Activated naive CD4-positive, alpha-beta T cell treated with anti-CD3 and anti-CD28 coated beads for 36 hours (primary cell): ENCODE measurements at regions of chr2 and their contacts with region 1.

Region 1: DNA sequence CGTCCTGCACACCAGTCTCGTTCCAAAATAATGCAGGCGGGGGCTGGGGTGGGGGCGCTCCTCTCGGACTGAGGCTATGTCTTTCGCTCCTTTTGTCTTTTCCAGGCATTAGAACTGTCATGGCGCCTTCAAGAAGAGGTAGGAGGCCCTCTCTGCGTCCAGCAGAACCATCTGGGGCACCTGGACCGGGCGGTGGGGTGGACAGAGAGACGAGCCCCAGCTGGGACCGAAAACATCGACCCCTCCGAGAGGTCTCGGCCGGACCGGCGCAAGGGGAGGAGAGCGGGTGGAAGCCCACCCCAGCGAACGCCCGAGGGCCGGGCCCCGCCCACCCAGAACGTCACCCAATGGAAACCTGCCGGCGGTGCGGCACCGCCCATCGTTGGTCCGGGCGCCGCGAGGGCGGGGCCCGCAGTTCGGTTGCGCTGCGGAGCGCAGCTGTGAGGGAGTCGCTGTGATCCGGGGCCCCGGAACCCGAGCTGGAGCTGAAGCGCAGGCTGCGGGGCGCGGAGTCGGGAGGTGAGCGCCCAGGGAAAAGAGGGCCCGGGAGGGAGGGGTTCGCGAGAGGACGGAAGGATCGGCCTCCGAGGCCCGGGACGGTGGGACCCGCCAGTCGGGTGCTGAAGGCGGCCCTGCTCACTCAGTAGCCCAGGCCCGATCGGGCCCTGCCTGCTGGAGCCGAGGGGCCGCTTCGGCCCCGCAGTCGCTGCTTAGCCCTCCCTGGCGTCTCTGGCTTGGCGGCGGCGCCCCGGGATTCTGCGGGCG is at the start of gene NRBP1:
- DNase-seq: peak; percentile 94
- H3K4me3 Mint-ChIP-seq: peak within 1 kb of the TSS; percentile 98
- H3K27ac Mint-ChIP-seq: peak within 1 kb of the TSS; percentile 94
- H3K4me1 Mint-ChIP-seq: peaks cover 31% of the 10 kb centered on the region
- H3K27me3 Mint-ChIP-seq: no peaks in the 10 kb centered on the region
- total RNA-seq, gene NRBP1: 60.0 to 63.3 TPM

Region 2: DNA sequence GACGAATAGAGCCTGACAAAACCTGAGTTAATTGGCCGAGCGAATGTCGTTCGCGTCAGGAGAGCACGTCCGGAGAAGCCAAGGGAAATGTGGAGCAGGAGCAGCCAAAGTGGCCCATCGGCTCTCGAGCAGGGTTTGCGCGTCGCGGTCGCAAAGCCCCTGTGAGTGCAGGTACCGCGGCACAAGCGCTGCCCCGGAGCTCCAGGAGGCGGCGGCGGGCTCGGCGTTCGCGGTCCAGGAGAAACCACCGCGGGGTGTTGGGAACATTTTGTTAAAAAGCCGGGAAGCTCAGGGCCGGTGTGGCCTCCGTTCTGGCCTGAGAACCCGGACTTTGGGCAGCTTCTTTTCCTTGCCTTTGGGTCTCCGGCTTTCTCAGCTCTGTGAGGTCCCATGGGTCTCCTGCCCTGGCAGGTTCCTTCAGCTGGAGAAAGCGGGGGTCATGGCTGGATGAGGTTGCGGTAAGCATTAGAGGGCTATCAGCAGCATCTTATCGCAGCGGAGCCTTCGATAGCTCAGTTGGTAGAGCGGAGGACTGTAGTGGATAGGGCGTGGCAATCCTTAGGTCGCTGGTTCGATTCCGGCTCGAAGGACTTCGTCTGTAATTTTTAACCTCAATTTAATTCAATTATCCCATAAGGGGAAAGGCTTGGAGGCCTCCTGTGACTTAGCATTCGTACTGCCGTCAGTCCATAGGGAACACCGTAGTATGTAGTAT is 378.0 kb before region 1 on chr2:
- CTCF ChIA-PET with region 1: no interaction called
- intact Hi-C with region 1: loop called (anchors 1 kb)
- DNase-seq: peak; percentile 97
- H3K4me3 Mint-ChIP-seq: peak overlapping the region; percentile 86
- H3K27ac Mint-ChIP-seq: peak overlapping the region; percentile 97
- H3K4me1 Mint-ChIP-seq: peaks cover 16% of the 10 kb centered on the region
- H3K27me3 Mint-ChIP-seq: peaks cover 6% of the 10 kb centered on the region

Region 3: DNA sequence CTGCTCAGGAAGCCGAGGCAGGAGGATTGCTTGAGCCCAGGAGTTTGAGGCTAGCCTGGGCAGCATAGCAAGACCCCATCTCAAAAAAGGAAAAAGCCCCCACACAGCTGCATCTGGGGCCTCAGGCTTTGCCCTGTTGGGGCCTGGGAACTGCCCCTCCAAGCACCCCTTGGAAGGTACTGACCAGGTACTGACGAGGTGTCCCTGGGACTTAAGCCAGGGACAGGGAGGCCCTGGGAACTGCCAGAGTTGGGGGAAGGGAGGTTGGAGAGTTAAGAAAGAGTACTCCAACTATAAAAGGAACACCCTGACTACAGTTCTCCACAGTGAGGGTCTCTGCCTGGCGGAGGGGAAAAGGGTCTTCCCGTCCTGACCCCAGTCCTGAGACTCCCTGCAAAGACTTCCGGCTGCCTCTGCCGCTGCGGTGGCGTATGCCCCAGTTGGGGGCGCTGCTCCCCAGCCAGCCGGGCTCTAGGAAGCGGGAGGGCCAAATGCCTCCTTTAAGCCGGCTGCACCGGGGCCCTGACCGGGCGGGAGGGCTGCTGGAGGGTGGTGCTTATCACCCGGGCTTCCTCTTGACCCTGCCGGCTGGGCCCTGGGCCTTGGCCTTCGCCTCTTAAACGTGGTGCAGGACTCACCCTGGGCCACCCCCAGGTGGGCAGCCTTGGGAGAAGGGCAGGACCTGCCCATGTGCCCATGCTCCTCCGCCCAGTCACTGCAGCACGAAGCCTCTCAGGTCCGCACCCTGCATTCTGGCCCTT is 178.3 kb before region 1 on chr2:
- CTCF ChIA-PET with region 1: no interaction called
- intact Hi-C with region 1: loop called (anchors 1 kb)
- DNase-seq: peak; percentile 76
- H3K4me3 Mint-ChIP-seq: no peak overlapping the region
- H3K27ac Mint-ChIP-seq: no peak overlapping the region
- H3K4me1 Mint-ChIP-seq: no peaks in the 10 kb centered on the region
- H3K27me3 Mint-ChIP-seq: peaks cover 4% of the 10 kb centered on the region

Region 4: DNA sequence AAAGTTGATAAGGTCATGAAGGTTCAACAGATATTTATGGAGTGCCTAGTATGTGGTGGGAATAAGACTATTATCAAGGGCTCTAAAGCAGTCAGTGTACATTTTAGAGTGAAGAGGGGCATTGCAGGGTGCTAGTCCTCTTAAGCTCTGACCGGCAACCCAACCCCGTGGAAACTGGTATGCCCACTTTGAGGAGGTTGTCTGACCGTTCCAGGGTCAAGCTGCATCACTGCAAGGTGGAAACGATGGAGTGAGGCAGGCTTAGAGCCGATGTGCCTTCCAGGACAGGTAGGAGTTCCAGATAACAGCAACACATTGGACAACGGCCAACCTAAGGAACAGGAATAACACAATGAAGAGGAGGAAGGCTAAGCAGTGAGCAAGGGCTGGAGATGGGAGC is 118.7 kb before region 1 on chr2:
- CTCF ChIA-PET with region 1: no interaction called
- intact Hi-C with region 1: no loop called
- DNase-seq: no peak
- H3K4me3 Mint-ChIP-seq: no peak overlapping the region
- H3K27ac Mint-ChIP-seq: no peak overlapping the region
- H3K4me1 Mint-ChIP-seq: peaks cover 7% of the 10 kb centered on the region
- H3K27me3 Mint-ChIP-seq: peaks cover 12% of the 10 kb centered on the region

Region 5: GRCh38 chr2:27356382-27357181 is 71.8 kb before region 1 on chr2 and contains the start of gene GTF3C2:
- CTCF ChIA-PET with region 1: interaction called, 3 read pairs
- intact Hi-C with region 1: loop called (anchors 1 kb)
- DNase-seq: peak; percentile 94
- H3K4me3 Mint-ChIP-seq: peak within 1 kb of the TSS; percentile 99
- H3K27ac Mint-ChIP-seq: peak within 1 kb of the TSS; percentile 99
- H3K4me1 Mint-ChIP-seq: peaks cover 59% of the 10 kb centered on the region
- H3K27me3 Mint-ChIP-seq: no peaks in the 10 kb centered on the region
- total RNA-seq, gene GTF3C2: 62.9 to 72.3 TPM

Region 6: DNA sequence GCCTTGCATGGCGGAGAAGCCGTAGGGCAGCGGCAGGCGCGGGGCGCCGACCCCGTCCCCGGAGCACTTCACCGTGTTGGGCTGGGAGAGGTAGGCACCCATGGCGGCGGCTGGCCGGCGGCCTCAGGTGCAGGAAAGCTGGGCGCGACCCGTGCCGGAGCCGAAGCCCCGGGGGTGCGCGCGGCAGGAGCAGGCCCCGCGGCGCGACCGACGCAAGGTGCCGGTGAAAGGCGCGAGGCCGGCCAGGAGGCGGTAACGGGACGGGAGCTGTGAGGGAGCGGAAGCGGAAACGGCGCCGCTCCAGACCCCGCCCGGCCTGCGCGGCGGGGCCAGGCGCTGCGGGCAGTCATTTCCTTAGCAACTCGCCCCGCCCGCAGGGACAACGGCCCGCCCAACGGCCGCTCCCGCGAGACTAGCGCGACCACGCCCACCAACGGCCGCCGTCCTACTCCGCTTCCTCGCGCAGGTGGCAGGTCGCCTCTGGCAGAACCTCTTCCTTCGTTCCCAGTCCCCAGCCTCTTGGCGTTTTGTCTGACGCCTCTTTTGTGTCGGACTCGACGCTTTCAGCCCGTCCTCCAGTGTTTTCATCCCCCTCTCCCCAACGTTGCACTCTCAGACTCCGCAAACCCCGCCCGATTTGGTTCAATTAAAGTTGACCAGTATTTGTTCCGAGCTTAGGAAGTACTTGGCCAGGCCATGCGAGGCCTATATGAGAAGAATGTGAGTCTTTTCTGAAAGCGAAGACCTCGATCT is 18.9 kb before region 1 on chr2 and contains the start of gene PPM1G:
- CTCF ChIA-PET with region 1: interaction called, 35 read pairs
- intact Hi-C with region 1: loop called (anchors 1 kb)
- DNase-seq: peak; percentile 97
- H3K4me3 Mint-ChIP-seq: peak within 1 kb of the TSS; percentile 89
- H3K27ac Mint-ChIP-seq: peak within 1 kb of the TSS; percentile 87
- H3K4me1 Mint-ChIP-seq: peaks cover 32% of the 10 kb centered on the region
- H3K27me3 Mint-ChIP-seq: no peaks in the 10 kb centered on the region
- total RNA-seq, gene PPM1G: 92.3 to 101 TPM

Region 7: GRCh38 chr2:27582695-27583389 is 154.4 kb after region 1 on chr2 and contains the start of gene ZNF512:
- CTCF ChIA-PET with region 1: no interaction called
- intact Hi-C with region 1: loop called (anchors 1 kb)
- DNase-seq: peak; percentile 86
- H3K4me3 Mint-ChIP-seq: peak within 1 kb of the TSS; percentile 99
- H3K27ac Mint-ChIP-seq: peak within 1 kb of the TSS; percentile 90
- H3K4me1 Mint-ChIP-seq: peaks cover 46% of the 10 kb centered on the region
- H3K27me3 Mint-ChIP-seq: no peaks in the 10 kb centered on the region
- total RNA-seq, gene ZNF512: 34.7 to 35.8 TPM

Region 8: DNA sequence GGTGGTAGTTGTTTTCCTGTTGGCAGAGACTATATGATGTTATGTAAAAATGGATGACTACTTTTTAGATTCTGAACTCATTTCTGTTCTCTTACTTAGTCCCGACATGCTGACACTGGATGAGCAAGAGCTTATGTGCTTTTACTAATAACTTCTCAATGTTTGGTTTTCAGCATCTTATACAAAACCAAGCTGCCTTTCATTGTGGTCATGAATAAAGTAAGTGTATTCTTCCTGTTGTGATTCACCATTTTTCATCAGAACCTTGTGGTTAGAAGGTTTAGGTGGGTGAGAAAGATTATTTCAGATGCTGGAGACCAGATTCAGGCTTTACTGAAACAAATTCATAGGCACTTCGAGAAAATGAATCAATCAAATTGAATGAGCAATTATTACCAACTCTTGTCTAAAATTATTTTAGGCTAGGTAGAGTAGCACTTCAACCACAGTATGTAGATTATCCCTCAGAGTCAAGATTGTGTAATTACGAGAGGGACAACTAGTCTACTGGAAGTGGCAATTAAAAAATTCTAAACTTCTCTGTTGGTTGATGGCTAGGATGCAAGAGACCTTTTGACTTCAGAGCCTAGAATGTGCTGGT is 209.7 kb after region 1 on chr2:
- CTCF ChIA-PET with region 1: no interaction called
- intact Hi-C with region 1: loop called (anchors 1 kb)
- DNase-seq: peak; percentile 17
- H3K4me3 Mint-ChIP-seq: peak overlapping the region; percentile 28
- H3K27ac Mint-ChIP-seq: peak overlapping the region; percentile 92
- H3K4me1 Mint-ChIP-seq: peaks cover 20% of the 10 kb centered on the region
- H3K27me3 Mint-ChIP-seq: no peaks in the 10 kb centered on the region

Region 9: DNA sequence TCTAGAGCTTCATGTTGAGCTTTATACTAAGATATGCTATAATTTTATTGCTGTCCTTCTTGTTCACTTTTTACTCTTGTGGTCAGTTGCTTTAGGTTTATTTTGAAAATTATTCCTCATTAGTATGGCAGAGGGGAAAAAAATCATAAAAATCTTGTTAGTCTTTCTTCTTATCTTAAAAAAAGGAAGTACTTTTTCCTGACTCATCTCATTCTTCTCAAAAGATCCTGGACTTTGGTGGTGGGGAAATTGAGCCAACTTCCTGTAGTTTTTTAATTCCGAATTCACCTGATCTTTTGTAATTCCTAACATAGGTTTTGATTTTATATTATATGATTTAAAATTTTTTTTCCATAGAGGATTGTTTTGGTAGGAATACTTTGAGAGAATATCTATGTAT is 239.1 kb after region 1 on chr2:
- CTCF ChIA-PET with region 1: no interaction called
- intact Hi-C with region 1: no loop called
- DNase-seq: no peak
- H3K4me3 Mint-ChIP-seq: no peak overlapping the region
- H3K27ac Mint-ChIP-seq: no peak overlapping the region
- H3K4me1 Mint-ChIP-seq: peaks cover 37% of the 10 kb centered on the region
- H3K27me3 Mint-ChIP-seq: no peaks in the 10 kb centered on the region